OCI-LY7 (cell line): ENCODE measurements at regions of chr17 and their contacts with region 1.

Region 1: GRCh38 chr17:72725433-72726068 is 366.9 kb downstream of the SLC39A11 start:
- DNase-seq: peak; percentile 80
- H3K4me3 ChIP-seq: peak overlapping the region; percentile 22
- H3K27ac ChIP-seq: peak overlapping the region; percentile 78
- H3K4me1 ChIP-seq: peaks cover 47% of the 10 kb centered on the region
- CTCF ChIP-seq: peak; percentile 100

Region 2: DNA sequence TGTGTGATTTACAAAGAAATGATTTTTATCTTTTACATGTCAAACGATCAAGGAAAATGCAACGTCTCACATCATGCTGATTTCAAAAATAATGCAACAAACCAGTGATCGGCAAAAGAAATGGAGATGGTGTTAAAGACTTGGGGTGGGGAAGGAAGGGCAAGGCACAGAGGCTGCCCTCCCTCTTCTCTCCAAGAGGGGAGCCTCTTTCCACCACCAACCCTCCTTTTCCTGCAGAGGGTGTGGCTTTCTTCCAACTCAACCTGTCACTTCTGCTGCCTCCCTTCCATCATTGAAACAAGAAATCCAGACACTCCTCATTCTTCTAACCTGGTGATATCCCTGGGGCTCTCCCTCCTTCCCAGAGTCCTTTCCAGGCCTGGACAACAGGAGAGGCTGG is 46.2 kb after region 1 on chr17:
- CTCF ChIA-PET with region 1: interaction called, 4 read pairs
- POLR2A ChIA-PET with region 1: interaction called, 3 read pairs
- intact Hi-C with region 1: loop called (anchors 1 kb)
- DNase-seq: peak; percentile 47
- H3K4me3 ChIP-seq: peak overlapping the region; percentile 55
- H3K27ac ChIP-seq: peak overlapping the region; percentile 96
- H3K4me1 ChIP-seq: peaks cover 60% of the 10 kb centered on the region
- CTCF ChIP-seq: 0 out of 2 replicates have a peak, but pooled peaks have one; percentile 24

Region 3: DNA sequence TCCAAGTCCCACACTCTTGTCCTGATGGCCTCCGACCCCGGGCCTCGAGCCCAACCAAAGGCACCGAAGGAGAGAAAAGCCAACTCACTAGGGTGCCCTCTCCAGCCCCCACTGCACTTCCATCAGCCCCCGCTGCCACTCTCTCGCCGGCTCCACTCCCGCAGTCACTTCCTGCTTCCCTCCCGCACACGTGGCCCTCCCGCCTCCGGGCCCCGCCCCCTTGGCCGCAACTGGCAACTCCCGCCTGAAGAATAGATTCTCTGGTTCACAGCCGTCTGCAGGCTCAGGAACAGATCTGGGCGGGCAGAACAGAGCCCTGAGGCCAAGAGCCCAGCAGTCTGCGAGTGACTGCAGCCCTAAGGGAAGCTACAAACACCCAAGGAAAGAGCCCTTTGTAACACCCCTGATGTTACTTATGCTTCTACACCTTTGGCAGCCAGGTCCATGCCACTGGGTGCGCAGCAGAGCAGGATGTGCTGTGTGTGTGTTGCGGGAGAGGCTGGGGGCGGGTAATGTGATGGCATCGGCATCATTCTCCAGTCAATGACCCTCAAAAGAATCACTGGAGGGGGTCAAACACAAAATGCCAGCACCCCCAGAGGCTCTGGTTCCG is 367.1 kb after region 1 on chr17 and contains the start of gene SLC39A11:
- CTCF ChIA-PET with region 1: no interaction called
- POLR2A ChIA-PET with region 1: interaction called, 3 read pairs
- intact Hi-C with region 1: loop called (anchors 1 kb)
- DNase-seq: peak; percentile 97
- H3K4me3 ChIP-seq: peak within 1 kb of the TSS; percentile 83
- H3K27ac ChIP-seq: no peak within 1 kb of the TSS
- H3K4me1 ChIP-seq: peaks cover 24% of the 10 kb centered on the region
- CTCF ChIP-seq: no peak
- total RNA-seq, gene SLC39A11: 22.7 and 25.6 TPM in 2 replicates

Region 4: GRCh38 chr17:73192894-73193701 is 467.5 kb after region 1 on chr17 and contains the start of gene COG1:
- CTCF ChIA-PET with region 1: interaction called, 7 read pairs
- POLR2A ChIA-PET with region 1: interaction called, 14 read pairs
- intact Hi-C with region 1: loop called (anchors 1 kb)
- DNase-seq: peak; percentile 97
- H3K4me3 ChIP-seq: peak within 1 kb of the TSS; percentile 78
- H3K27ac ChIP-seq: peak within 1 kb of the TSS; percentile 83
- H3K4me1 ChIP-seq: peaks cover 17% of the 10 kb centered on the region
- CTCF ChIP-seq: no peak
- total RNA-seq, gene COG1: 19.8 and 38.3 TPM in 2 replicates

Region 5: GRCh38 chr17:73255671-73256181 is 530.2 kb after region 1 on chr17:
- CTCF ChIA-PET with region 1: no interaction called
- POLR2A ChIA-PET with region 1: no interaction called
- intact Hi-C with region 1: loop called (anchors 1 kb)
- DNase-seq: peak; percentile 66
- H3K4me3 ChIP-seq: no peak overlapping the region
- H3K27ac ChIP-seq: no peak overlapping the region
- H3K4me1 ChIP-seq: no peaks in the 10 kb centered on the region
- CTCF ChIP-seq: peak; percentile 100